ENCODE measurements at regions of chr16 and their contacts with region 1.

Region 1: GRCh38 chr16:86854058-86854621 is 275.8 kb downstream of the FOXL1 start:
- DNase-seq: no peak
- H3K4me3 ChIP-seq: no peak overlapping the region
- H3K27ac ChIP-seq: no peak overlapping the region
- H3K4me1 ChIP-seq: no peaks in the 10 kb centered on the region
- H3K27me3 ChIP-seq: no peaks in the 10 kb centered on the region
- CTCF ChIP-seq: no peak

Region 2: DNA sequence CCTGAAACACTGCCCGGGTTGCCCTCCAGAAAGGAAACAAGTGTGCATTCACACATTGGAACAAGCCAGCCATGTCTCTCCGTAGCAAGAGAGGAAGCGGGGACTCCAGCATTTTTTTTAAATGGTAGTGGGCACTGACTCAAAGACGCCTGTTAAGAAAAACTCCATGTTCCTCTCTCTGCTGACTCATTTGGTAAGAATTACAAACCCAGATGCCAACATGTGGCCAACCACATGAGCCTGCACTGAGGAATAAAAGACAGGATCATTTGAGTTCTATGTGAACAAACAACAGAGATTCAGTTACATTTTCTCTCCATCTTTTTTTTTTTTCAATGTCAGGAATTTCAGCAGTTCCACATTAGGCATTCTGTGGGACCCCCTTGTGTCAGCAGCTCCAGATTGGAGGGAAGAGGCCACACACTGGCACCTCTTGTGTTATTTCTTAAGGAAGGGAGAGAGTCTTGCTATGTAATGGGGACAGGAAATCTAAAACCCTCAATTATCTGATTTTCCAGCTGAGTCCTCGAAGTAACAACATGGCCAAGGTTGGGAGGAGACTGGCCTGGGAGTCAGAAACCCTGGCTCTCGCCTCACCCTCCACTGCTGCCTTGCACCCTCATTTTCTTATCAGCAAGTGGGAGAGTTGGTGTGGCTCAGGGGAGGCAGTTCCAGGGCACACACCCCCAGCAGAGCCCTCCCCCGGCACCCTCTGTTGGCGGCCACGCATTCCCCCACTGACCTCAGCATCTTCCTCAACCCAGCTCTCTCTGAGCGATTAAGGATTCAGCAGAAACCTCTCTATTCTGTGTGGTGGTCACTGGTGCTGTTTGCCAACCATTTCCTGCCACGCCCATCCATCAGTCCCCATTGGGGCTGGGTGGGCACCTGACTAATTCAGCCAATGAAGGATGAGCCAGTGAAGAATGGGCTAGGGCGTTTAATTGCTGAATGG is 102.8 kb before region 1 on chr16:
- CTCF ChIA-PET with region 1: no interaction called
- dilution Hi-C with region 1: loop called (anchors 5 kb)
- in situ Hi-C with region 1: no loop called
- intact Hi-C with region 1: no loop called
- DNase-seq: peak; percentile 83
- H3K4me3 ChIP-seq: no peak overlapping the region
- H3K27ac ChIP-seq: peak overlapping the region; percentile 18
- H3K4me1 ChIP-seq: peaks cover 30% of the 10 kb centered on the region
- H3K27me3 ChIP-seq: no peaks in the 10 kb centered on the region
- CTCF ChIP-seq: no peak

Region 3: GRCh38 chr16:87149051-87149450 is 294.9 kb after region 1 on chr16:
- CTCF ChIA-PET with region 1: no interaction called
- dilution Hi-C with region 1: no loop called
- in situ Hi-C with region 1: no loop called
- intact Hi-C with region 1: no loop called
- DNase-seq: peak; percentile 53
- H3K4me3 ChIP-seq: no peak overlapping the region
- H3K27ac ChIP-seq: no peak overlapping the region
- H3K4me1 ChIP-seq: no peaks in the 10 kb centered on the region
- H3K27me3 ChIP-seq: no peaks in the 10 kb centered on the region
- CTCF ChIP-seq: no peak

Region 4: DNA sequence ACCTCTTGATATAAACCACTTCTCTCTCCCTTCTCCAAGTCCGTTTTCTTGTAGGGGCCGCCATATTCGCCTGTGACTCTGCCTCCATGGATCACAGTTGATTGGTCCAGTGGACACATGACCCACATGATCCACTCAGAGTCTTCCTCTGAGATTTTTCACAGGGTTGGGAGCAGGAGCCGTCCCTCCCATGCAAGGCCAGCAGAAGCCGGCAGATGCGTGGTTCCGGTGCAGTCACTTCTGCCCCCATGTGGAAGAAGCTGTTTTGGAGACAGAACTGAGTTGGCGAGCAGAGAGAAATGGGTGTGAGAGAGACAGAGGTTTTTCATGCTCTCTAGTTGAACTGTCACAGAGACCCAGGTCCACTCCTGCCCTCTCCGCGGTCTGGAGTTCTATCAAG is 379.8 kb after region 1 on chr16:
- CTCF ChIA-PET with region 1: no interaction called
- dilution Hi-C with region 1: loop called (anchors 10 kb)
- in situ Hi-C with region 1: no loop called
- intact Hi-C with region 1: no loop called
- DNase-seq: no peak
- H3K4me3 ChIP-seq: no peak overlapping the region
- H3K27ac ChIP-seq: no peak overlapping the region
- H3K4me1 ChIP-seq: no peaks in the 10 kb centered on the region
- H3K27me3 ChIP-seq: no peaks in the 10 kb centered on the region
- CTCF ChIP-seq: peak in 1 of 2 donors; percentile 34

Measured in mammary epithelial cell (primary cell).